ENCODE measurements at regions of chrX and their contacts with region 1.

Region 1: DNA sequence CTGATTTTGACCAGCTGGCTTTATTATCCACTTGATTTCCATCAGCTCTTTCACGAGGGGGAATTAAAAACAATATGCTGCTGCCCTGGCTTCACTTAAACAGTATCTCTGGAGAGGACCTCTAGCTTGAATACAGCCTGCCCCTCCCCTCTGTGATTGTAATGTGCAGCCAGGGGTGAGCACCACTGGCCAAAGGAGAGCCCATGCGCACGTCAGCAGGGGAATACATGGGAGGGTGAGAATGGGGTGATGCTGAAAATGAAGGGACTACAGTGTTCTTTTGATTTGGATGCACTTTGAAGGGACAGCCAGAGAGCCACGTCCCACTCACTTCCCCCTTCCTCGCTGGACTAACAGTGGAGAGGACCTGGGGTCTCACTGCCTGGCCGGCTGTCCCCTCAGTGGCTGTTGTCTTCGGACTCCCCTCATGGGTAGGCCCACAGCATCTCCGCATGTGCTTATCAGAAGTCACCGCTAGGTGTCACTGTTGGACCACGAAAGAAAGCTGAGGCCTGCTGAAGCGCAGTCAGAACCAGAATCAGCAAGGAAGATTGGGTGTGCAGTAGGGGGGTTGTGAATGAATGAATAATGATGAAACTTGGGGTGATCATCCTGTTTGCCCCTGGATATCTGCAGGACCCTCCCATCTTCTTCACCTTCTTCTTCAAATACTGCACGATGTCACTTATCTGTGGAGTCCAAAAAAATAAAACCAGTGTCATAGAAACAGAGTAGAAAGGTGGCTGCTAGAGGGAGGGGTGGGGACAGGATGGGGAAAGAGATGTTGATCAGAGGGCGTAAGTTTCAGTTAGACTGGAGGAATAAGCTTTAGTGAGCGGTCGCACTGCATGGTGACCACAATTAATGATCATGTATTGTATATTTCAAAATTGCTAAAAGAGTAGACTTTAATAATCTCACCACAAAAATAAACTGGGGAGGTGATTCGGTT is 32.8 kb downstream of the CLCN4 start:
- DNase-seq: peak; percentile 58 to 85
- H3K4me3 ChIP-seq: no peak overlapping the region
- H3K4me1 ChIP-seq: peaks cover 3% of the 10 kb centered on the region; the same call in 1 of the 2 replicates
- H3K27me3 ChIP-seq: no peaks in the 10 kb centered on the region

Region 2: GRCh38 chrX:9873952-9874351 is 315.6 kb before region 1 on chrX:
- in situ Hi-C with region 1: no loop called
- DNase-seq: peak; percentile 29 to 63
- H3K4me3 ChIP-seq: no peak overlapping the region
- H3K4me1 ChIP-seq: peaks cover 25% of the 10 kb centered on the region
- H3K27me3 ChIP-seq: no peaks in the 10 kb centered on the region

Region 3: GRCh38 chrX:10615931-10616775 is 426.6 kb after region 1 on chrX:
- in situ Hi-C with region 1: loop called (anchors 10 kb)
- DNase-seq: peak; percentile 75 to 82
- H3K4me3 ChIP-seq: no peak overlapping the region
- H3K4me1 ChIP-seq: peaks cover 45% of the 10 kb centered on the region
- H3K27me3 ChIP-seq: no peaks in the 10 kb centered on the region

Region 4: GRCh38 chrX:10636337-10636736 is 446.7 kb after region 1 on chrX:
- in situ Hi-C with region 1: loop called (anchors 5 kb)
- DNase-seq: peak; percentile 74 to 86
- H3K4me3 ChIP-seq: no peak overlapping the region
- H3K4me1 ChIP-seq: peaks cover 30% of the 10 kb centered on the region
- H3K27me3 ChIP-seq: no peaks in the 10 kb centered on the region

Region 5: DNA sequence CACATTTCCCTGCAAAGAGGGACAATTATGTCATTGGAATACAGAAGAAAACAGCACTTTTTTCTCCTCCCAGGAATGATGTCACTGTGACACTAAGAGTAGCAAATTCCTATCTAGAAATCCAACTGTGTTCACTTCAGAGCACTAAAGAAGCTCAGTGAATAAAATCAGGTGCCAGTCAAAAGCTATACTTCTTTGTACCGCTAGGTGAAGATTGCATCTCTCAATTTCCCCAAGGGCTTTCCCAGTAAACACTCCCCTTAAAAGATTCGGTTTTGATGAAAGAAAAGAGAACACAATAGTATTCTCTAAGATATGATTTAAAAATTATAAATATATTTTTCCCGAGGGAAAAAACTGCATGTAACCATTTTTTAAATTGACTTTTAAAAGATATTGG is 535.5 kb after region 1 on chrX:
- in situ Hi-C with region 1: loop called (anchors 25 kb)
- DNase-seq: peak in 1 of 2 experiments; percentile 56
- H3K4me3 ChIP-seq: no peak overlapping the region
- H3K4me1 ChIP-seq: no peaks in the 10 kb centered on the region
- H3K27me3 ChIP-seq: no peaks in the 10 kb centered on the region; the same call in 1 of the 2 replicates

Region 6: GRCh38 chrX:11100281-11101035 is 910.9 kb after region 1 on chrX:
- in situ Hi-C with region 1: loop called (anchors 10 kb)
- DNase-seq: peak; percentile 65 to 77
- H3K4me3 ChIP-seq: no peak overlapping the region
- H3K4me1 ChIP-seq: peaks cover 5% of the 10 kb centered on the region
- H3K27me3 ChIP-seq: no peaks in the 10 kb centered on the region

Region 7: DNA sequence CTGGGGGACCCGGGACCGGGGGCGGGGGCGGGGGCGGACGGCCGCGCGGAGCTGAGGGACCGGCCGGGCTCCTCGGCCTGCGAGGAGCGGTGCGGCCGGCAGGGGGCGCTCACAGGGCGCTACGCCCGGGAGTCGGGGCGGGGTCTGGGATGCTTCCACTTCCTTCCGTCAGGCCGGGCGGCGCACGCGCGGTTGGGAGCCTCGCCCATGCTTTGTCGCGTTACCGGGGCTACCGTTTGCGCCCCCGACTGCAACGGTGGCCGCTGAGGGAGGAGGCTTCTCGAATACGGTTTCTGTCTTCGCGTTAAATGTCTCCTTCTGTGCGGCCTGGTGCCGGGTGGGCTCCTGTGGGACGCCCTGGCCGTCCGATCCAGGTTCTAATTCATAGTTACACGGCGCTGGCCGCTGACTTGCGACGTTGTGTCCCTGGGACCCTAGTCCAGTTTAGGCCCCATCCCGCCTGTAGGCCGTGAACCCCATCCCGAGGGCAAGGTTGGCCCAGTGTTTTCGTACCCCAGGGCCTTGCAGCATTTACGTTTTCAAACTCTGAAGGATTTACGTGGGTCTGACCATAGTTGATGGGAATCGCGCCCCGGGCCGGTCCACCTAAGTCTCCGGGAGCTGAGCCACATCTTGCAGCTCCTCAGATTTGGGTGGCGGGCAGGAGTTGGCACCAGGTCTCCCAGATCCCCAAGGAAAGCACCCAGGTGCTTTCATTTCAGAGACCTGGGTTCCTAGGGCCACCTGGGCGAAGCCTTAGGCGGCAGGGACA is 1569.0 kb after region 1 on chrX:
- in situ Hi-C with region 1: loop called (anchors 25 kb)
- DNase-seq: peak; percentile 81 to 95
- H3K4me3 ChIP-seq: peak overlapping the region; percentile 91
- H3K4me1 ChIP-seq: peaks cover 11% of the 10 kb centered on the region
- H3K27me3 ChIP-seq: no peaks in the 10 kb centered on the region

Measured in HAP-1 (cell line).